Dorsolateral prefrontal cortex (tissue), 120 donors: ENCODE measurements at regions of chr4 and their contacts with region 1.

Region 1: GRCh38 chr4:82629238-82630000 is 67.6 kb upstream of the TMEM150C start:
- DNase-seq: no peak
- H3K4me3 ChIP-seq: peak overlapping the region in 2 of 59 donors; percentile 8 to 23
- H3K27ac ChIP-seq: peak overlapping the region; percentile 68 to 99 (median 94)
- H3K27me3 ChIP-seq: no peaks in the 10 kb centered on the region
- CTCF ChIP-seq: peak in 1 of 56 donors; percentile 16

Region 2: DNA sequence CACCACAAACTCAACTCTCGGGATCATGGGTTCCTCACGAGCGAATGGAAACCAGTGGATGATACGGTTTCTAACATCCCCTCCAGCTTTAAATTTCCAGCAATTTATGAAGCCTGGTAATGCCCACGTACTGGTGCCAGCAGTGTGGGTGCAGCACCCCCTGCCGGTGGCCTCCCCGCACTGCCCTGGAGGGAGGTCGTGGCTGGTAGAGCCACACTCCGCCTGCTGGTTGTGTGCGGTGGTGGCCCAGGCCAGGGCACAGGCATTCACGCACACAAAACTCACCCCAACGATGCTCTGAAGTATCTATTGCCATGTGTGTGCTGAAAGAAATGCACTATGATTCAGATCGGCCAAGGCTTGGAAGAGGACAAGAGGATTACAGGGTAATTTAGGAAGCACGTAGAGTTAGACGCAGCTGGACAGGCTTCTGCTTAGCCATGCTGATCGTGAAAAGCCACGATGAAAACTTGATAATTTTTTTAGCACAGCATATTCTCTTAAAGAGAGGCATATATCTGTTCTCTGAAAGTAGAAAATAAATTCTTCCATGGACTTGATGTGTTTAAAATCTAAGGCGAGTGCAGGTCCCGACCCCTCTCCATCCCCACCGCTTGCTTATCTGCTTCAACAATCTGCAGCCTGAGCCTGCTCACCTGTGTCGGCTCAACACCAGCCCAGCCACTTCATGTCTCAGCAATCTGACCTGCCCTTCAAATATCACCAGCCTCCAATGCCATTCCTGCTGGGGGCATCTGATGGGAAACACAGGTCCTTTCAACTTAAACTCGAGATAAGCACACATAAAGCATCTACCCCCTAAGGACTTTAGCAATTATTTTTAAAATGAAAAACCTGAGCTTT is 110.1 kb after region 1 on chr4:
- intact Hi-C with region 1: loop called in 1 of 2 experiments (anchors 10 kb)
- DNase-seq: peak in 9 of 10 donors; percentile 50 to 81 (median 75)
- H3K4me3 ChIP-seq: peak overlapping the region in 1 of 59 donors; percentile 2
- H3K27ac ChIP-seq: peak overlapping the region in 56 of 59 donors; percentile 9 to 94 (median 75)
- H3K27me3 ChIP-seq: no peaks in the 10 kb centered on the region
- CTCF ChIP-seq: peak; percentile 40 to 100 (median 94)

Region 3: GRCh38 chr4:82753725-82754410 is 124.4 kb after region 1 on chr4:
- intact Hi-C with region 1: no loop called
- DNase-seq: no peak
- H3K4me3 ChIP-seq: peak overlapping the region in 17 of 59 donors; percentile 0 to 38 (median 12)
- H3K27ac ChIP-seq: peak overlapping the region; percentile 58 to 97 (median 88)
- H3K27me3 ChIP-seq: no peaks in the 10 kb centered on the region
- CTCF ChIP-seq: no peak

Region 4: DNA sequence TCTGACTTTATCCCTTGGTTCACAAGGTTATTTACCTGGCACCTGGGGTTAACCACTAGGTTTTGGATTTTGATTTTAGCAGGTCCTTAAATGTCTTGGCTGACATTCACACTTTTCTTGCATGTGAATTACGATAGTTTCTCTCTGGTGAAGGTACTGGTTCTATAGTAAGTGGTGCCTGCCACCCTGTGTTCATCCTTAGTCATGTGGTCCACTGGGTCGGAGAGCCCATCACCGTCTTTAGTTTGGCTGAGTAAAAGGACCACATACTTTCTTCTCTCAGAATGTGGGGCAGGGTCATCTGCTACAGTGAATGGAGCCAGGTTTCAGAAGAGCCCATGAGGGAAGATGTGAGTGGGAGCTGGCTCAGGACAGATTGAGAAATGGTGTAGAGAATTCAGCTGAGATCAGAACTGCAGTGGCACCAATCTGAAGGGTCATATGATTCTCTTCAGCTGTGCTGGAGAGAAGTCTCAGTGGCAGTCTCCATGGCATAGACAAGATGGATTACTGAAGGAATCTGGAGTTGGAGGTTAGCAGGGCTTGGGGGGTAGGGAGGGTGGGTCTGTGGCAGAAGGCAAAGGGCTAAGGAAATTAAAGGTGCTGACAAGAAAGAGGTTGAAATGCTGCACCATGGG is 1216.9 kb after region 1 on chr4:
- intact Hi-C with region 1: no loop called
- DNase-seq: no peak
- H3K4me3 ChIP-seq: no peak overlapping the region
- H3K27ac ChIP-seq: no peak overlapping the region
- H3K27me3 ChIP-seq: peaks cover 0 to 18% (median 0%) of the 10 kb centered on the region in 45 donors
- CTCF ChIP-seq: no peak